Ovary (tissue), 10 donors: ENCODE measurements at regions of chr15 and their contacts with region 1.

Region 1: DNA sequence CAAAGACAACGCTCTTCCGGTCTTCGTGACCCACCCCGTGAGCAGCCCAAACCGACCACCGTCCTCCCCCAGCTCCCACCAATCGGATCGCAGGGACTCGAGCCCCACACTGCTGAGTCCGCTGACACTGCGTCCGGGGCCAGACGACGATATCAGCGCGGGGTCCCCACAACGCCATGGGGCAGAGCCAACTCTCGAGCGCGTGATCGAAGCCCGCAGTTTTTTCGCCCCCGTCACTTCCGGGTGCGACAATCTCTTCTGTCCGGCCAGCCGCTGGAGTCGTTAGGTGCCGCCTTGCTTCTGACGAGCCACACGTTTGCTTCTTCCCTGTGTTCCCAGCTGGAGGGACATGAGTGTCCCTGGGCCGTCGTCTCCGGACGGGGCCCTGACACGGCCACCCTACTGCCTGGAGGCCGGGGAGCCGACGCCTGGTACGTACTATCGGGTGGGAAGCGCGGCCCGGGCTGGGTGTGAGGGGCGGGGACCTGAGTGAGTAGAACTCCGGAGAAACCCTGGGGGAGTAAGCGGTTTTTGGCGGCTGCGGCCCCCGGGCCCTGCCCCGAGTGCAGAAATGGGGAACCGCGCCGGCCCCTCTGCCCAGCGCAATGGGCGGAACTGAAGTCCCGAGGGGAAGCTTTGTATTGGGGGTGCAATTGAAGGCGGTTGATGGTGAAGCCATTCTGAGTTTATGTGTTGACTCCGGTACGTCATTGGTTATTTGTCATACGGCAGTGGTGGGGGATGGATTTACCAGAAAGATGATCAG is at the start of gene BLOC1S6:
- DNase-seq: peak; percentile 91 to 95 (median 92)
- H3K4me3 ChIP-seq: peak within 1 kb of the TSS; percentile 64
- H3K27ac ChIP-seq: peak within 1 kb of the TSS; percentile 97 to 98
- H3K4me1 ChIP-seq: peaks cover 7% of the 10 kb centered on the region
- H3K27me3 ChIP-seq: no peaks in the 10 kb centered on the region
- CTCF ChIP-seq: peak in 1 of 3 donors; percentile 12
- EP300 ChIP-seq: peak; percentile 25
- POLR2A ChIP-seq: peak; percentile 67
- total RNA-seq, gene BLOC1S6: 34.1 to 58.3 (median 46.1) TPM

Region 2: GRCh38 chr15:45198337-45199135 is 388.7 kb before region 1 on chr15:
- intact Hi-C with region 1: no loop called
- DNase-seq: peak; percentile 94 to 98 (median 96)
- H3K4me3 ChIP-seq: peak overlapping the region; percentile 73
- H3K27ac ChIP-seq: peak overlapping the region; percentile 80 to 97
- H3K4me1 ChIP-seq: no peaks in the 10 kb centered on the region
- H3K27me3 ChIP-seq: no peaks in the 10 kb centered on the region
- CTCF ChIP-seq: peak; percentile 44 to 86 (median 82)
- EP300 ChIP-seq: no peak
- POLR2A ChIP-seq: peak; percentile 98

Region 3: DNA sequence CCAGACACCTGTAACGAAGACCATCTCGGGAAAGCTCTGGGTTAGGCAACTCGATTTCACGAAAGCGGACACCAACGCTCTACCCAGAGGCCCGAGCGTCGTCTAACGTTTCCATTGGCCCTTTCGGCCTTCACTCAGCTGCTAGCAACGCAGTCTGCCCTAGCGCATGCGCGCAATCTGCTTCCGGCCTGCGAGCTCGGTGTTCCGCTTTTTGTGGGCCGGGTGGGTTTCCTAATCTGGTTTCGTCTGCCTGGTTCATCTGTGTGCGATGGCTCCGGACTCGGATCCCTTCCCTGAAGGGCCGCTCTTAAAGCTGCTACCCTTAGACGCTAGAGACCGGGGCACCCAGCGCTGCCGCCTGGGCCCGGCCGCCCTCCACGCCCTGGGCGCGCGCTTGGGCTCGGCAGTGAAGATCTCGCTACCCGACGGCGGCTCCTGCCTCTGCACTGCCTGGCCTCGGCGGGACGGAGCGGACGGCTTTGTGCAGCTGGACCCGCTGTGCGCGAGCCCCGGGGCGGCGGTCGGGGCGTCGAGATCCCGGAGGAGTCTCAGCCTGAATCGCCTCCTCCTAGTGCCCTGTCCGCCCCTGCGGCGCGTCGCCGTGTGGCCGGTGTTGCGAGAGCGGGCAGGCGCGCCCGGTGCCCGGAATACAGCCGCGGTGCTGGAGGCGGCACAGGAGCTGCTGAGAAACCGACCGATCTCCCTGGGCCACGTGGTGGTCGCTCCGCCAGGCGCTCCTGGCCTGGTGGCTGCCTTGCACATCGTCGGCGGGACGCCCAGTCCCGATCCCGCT is 184.9 kb before region 1 on chr15:
- intact Hi-C with region 1: loop called in 1 of 4 experiments (anchors 5 kb)
- DNase-seq: peak; percentile 94 to 98 (median 97)
- H3K4me3 ChIP-seq: peak overlapping the region; percentile 98
- H3K27ac ChIP-seq: peak overlapping the region; percentile 56 to 85
- H3K4me1 ChIP-seq: peaks cover 3% of the 10 kb centered on the region
- H3K27me3 ChIP-seq: no peaks in the 10 kb centered on the region
- CTCF ChIP-seq: no peak
- EP300 ChIP-seq: no peak
- POLR2A ChIP-seq: peak; percentile 65

Region 4: GRCh38 chr15:45522328-45523160 is 64.7 kb before region 1 on chr15 and contains the start of gene SLC30A4:
- intact Hi-C with region 1: loop called in 1 of 4 experiments (anchors 10 kb)
- DNase-seq: peak; percentile 68 to 83 (median 72)
- H3K4me3 ChIP-seq: peak within 1 kb of the TSS; percentile 71
- H3K27ac ChIP-seq: peak within 1 kb of the TSS; percentile 77 to 82
- H3K4me1 ChIP-seq: peaks cover 3% of the 10 kb centered on the region
- H3K27me3 ChIP-seq: no peaks in the 10 kb centered on the region
- CTCF ChIP-seq: peak in 2 of 3 donors; percentile 42 to 53
- EP300 ChIP-seq: no peak
- POLR2A ChIP-seq: peak; percentile 28
- total RNA-seq, gene SLC30A4: 4.2 to 10.9 (median 8.8) TPM

Region 5: GRCh38 chr15:45573961-45574629 is 13.2 kb before region 1 on chr15:
- intact Hi-C with region 1: no loop called
- DNase-seq: no peak
- H3K4me3 ChIP-seq: no peak overlapping the region
- H3K27ac ChIP-seq: no peak overlapping the region
- H3K4me1 ChIP-seq: no peaks in the 10 kb centered on the region
- H3K27me3 ChIP-seq: no peaks in the 10 kb centered on the region
- CTCF ChIP-seq: no peak
- EP300 ChIP-seq: no peak
- POLR2A ChIP-seq: no peak

Region 6: GRCh38 chr15:45618813-45619212 is 31.5 kb after region 1 on chr15:
- intact Hi-C with region 1: no loop called
- DNase-seq: no peak
- H3K4me3 ChIP-seq: no peak overlapping the region
- H3K27ac ChIP-seq: no peak overlapping the region
- H3K4me1 ChIP-seq: no peaks in the 10 kb centered on the region
- H3K27me3 ChIP-seq: no peaks in the 10 kb centered on the region
- CTCF ChIP-seq: no peak
- EP300 ChIP-seq: no peak
- POLR2A ChIP-seq: no peak

Region 7: DNA sequence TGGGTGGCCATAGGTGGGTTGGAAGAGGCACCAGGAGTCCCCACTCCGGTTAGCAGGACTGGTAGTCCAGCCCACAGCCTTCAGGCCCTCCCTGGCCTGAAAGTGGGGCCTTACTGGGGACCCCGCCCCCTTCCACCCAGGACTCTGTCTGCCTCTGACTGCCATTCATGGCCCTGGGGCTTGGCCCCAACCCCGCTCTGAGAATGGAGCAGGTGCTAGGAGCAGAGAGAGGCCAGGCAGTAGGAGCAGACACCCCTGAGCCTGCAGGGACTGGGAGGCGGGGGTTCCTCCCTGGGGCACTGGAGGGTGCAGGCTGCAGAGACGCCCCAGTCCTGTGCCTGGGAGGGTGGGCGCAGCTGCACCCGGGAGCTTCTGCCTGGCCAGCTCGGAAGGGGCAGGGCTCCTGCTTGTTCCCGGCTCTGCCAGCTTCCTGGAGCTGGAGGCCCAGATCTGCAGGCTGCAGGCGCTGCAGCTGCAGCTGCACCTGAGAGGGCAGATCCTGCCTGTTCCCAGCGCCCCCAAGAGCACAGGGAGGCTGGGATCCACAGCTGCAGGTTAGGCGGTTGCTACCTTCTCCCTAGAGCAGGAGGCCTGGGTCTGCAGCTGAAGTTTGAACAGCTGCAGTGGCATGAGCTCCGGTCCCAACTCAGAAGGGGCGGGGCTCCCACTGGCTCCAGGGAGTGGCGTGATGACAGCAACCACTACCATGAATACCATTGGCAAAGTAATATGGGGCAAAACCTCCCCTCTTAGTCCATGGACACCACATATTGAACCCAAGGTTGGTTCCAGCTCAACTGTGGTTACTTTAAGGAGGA is 242.3 kb after region 1 on chr15:
- intact Hi-C with region 1: no loop called
- DNase-seq: no peak
- H3K4me3 ChIP-seq: no peak overlapping the region
- H3K27ac ChIP-seq: no peak overlapping the region
- H3K4me1 ChIP-seq: no peaks in the 10 kb centered on the region
- H3K27me3 ChIP-seq: no peaks in the 10 kb centered on the region
- CTCF ChIP-seq: no peak
- EP300 ChIP-seq: no peak
- POLR2A ChIP-seq: no peak